ENCODE measurements at regions of chr17 and their contacts with region 1.

Region 1: DNA sequence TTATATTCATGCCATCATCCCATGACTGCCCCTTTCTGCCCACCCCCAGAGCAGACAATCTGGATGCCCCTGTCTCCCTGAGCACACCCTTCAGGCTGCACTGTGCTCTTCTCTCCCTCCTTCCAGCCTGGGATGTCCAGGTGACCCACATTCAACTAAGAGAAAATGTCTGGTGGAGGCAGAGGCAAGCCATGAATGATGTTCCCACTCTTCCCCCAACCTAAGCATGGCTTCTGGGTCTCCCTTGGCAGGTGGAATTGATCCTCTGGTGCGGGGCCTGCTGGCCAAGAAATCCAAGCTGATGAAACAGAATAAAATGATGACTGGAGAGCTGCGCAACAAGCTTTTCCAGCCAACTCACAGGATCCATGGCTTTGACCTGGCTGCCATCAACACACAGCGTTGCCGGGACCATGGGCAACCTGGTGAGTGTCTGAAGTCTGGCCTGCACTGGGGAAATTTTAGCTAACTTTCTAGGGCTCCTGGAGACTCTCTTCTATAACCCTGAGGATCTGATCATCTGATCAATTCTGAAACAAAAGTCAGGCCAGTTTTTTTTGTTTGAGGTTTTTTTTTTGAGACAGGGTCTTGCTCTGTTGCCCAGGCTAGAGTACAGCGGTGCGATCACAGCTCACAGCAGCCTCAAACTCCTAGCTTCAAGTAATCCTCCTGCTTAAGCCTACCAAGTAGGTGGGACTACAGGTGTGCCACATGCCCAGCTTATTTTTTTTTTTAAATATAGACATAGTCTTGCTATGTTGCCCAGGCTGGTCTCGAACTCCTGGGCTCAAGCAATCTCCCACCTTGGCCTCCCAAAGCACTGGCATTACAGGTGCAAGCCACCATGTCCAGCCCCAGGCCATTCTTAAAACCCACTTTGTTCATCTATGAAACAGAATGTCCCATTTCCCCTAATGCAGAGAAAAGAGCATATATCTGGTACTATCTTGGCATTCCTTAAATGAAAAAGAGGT is 14.5 kb downstream of the MPO start:
- DNase-seq: peak in 1 of 2 experiments; percentile 20
- H3K4me3 ChIP-seq: no peak overlapping the region
- H3K27ac ChIP-seq: no peak overlapping the region
- H3K4me1 ChIP-seq: no peaks in the 10 kb centered on the region
- H3K27me3 ChIP-seq: no peaks in the 10 kb centered on the region; a peak in 1 of 7 replicates
- CTCF ChIP-seq: no peak
- EP300 ChIP-seq: no peak
- POLR2A ChIP-seq: no peak
- RAD21 ChIP-seq: no peak

Region 2: DNA sequence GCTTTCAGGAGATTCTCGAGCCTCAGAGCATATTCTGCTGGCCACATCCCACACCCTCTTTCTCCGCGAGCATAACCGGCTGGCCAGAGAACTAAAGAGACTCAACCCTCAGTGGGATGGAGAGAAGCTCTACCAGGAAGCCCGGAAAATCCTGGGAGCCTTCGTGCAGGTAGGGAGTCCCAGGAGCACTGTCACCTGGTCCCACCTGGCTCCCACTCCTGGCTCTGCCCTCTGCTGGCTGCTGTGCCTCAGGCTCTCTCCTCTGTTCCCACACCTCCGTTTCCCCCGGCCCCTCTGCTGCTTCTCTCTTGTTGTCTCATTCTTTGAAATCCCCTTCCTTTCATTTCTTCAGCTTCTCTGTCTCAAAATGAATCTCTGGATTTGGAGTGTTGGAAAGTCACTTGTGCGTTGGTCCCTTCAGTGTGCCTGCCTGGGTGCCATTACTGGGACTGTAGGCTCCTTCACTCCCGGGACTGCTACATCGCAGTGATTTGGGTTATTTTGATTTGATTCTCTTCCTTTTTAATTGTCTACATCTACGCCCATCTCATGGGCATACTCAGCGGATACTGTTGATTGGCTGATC is 11.3 kb before region 1 on chr17:
- CTCF ChIA-PET with region 1: interaction called, 15 read pairs
- POLR2A ChIA-PET with region 1: no interaction called
- DNase-seq: peak in 1 of 2 experiments; percentile 70
- H3K4me3 ChIP-seq: peak overlapping the region in 1 of 4 experiments; percentile 43; a peak in 2 of 8 replicates
- H3K27ac ChIP-seq: no peak overlapping the region
- H3K4me1 ChIP-seq: no peaks in the 10 kb centered on the region
- H3K27me3 ChIP-seq: peaks cover 18 to 37% (median 25%) of the 10 kb centered on the region in 4 experiments
- CTCF ChIP-seq: peak; percentile 74 to 88 (median 78)
- EP300 ChIP-seq: no peak
- POLR2A ChIP-seq: no peak
- RAD21 ChIP-seq: peak; percentile 38 to 58; a peak in 3 of 4 replicates

Measured in H1 (cell line).